Activated CD8-positive, alpha-beta T cell treated with anti-CD3 and anti-CD28 coated beads, Interleukin-2, amount 10 ng/mL, durations not matched to agents 7 days and 5 days (primary cell): ENCODE measurements at regions of chr5 and their contacts with region 1.

Region 1: GRCh38 chr5:54944364-54944763 is 41.0 kb downstream of the ESM1 start:
- DNase-seq: peak; percentile 65
- ATAC-seq: peak; percentile 67
- H3K4me3 Mint-ChIP-seq: no peak overlapping the region
- H3K27ac Mint-ChIP-seq: no peak overlapping the region
- H3K4me1 Mint-ChIP-seq: peaks cover 18% of the 10 kb centered on the region
- H3K27me3 Mint-ChIP-seq: peaks cover 10% of the 10 kb centered on the region

Region 2: GRCh38 chr5:54930736-54931135 is 13.6 kb before region 1 on chr5:
- CTCF ChIA-PET with region 1: interaction called, 33 read pairs
- POLR2A ChIA-PET with region 1: interaction called, 3 read pairs
- DNase-seq: no peak
- ATAC-seq: no peak
- H3K4me3 Mint-ChIP-seq: no peak overlapping the region
- H3K27ac Mint-ChIP-seq: no peak overlapping the region
- H3K4me1 Mint-ChIP-seq: peaks cover 17% of the 10 kb centered on the region
- H3K27me3 Mint-ChIP-seq: peaks cover 25% of the 10 kb centered on the region

Region 3: DNA sequence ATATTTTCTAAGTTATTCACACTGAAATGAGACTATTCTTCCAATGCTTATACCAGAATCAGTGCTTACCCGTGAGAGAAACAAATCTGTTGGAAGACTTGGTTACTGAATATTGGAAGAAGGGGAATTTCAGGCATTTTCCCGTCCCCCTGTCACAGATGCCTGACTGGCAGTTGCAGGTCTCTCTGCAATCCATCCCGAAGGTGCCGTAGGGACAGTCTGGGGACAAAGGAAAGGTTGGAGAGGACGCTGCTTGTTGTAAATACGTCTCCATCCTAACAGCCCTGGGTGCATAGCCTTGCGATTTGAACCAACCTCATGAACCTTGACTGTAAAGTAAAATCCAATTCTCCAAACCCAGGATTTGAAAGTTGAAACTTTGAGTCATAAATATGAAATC is 37.6 kb after region 1 on chr5:
- CTCF ChIA-PET with region 1: interaction called, 21 read pairs
- POLR2A ChIA-PET with region 1: no interaction called
- DNase-seq: no peak
- ATAC-seq: no peak
- H3K4me3 Mint-ChIP-seq: no peak overlapping the region
- H3K27ac Mint-ChIP-seq: no peak overlapping the region
- H3K4me1 Mint-ChIP-seq: peaks cover 34% of the 10 kb centered on the region
- H3K27me3 Mint-ChIP-seq: peaks cover 24% of the 10 kb centered on the region

Region 4: GRCh38 chr5:55037046-55037771 is 92.8 kb after region 1 on chr5:
- CTCF ChIA-PET with region 1: interaction called, 38 read pairs
- POLR2A ChIA-PET with region 1: no interaction called
- DNase-seq: peak; percentile 84
- ATAC-seq: peak; percentile 96
- H3K4me3 Mint-ChIP-seq: no peak overlapping the region
- H3K27ac Mint-ChIP-seq: peak overlapping the region; percentile 89
- H3K4me1 Mint-ChIP-seq: peaks cover 50% of the 10 kb centered on the region
- H3K27me3 Mint-ChIP-seq: no peaks in the 10 kb centered on the region

Region 5: GRCh38 chr5:55102348-55102747 is 158.0 kb after region 1 on chr5 and contains the start of gene GZMA:
- CTCF ChIA-PET with region 1: interaction called, 38 read pairs
- POLR2A ChIA-PET with region 1: no interaction called
- DNase-seq: peak; percentile 68
- ATAC-seq: peak; percentile 78
- H3K4me3 Mint-ChIP-seq: peak within 1 kb of the TSS; percentile 84
- H3K27ac Mint-ChIP-seq: peak within 1 kb of the TSS; percentile 94
- H3K4me1 Mint-ChIP-seq: peaks cover 86% of the 10 kb centered on the region
- H3K27me3 Mint-ChIP-seq: peaks cover 2% of the 10 kb centered on the region
- total RNA-seq, gene GZMA: 356 to 365 TPM

Region 6: DNA sequence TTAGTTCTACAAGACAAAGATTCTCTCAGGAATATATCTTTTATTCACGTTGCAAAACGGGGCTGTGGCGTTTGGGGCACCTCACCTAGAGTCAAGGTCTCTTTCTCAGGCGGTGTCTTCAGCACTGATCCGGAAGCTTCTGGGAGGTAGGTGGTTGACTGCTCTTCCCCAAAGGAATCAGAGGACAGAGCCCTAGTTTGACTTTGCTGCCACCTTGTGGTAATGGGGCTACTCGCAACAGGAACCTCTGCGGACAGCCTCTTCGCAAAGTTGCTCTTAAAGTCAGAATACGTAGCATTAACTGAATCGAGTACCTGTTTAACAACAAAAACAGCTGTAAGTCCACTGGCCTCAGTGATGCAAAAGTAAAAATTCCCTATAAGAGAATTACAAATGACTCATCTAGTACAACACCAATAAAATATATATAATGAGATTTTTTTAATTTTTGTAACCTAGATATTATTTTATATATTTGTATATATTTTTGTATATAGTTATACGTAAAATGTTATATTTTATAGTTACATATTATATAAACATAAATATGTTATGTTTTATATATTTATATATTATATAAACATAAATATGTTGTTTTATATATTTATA is 202.3 kb after region 1 on chr5:
- CTCF ChIA-PET with region 1: interaction called, 49 read pairs
- POLR2A ChIA-PET with region 1: interaction called, 3 read pairs
- DNase-seq: peak; percentile 91
- ATAC-seq: peak; percentile 82
- H3K4me3 Mint-ChIP-seq: peak overlapping the region; percentile 34
- H3K27ac Mint-ChIP-seq: peak overlapping the region; percentile 67
- H3K4me1 Mint-ChIP-seq: peaks cover 43% of the 10 kb centered on the region
- H3K27me3 Mint-ChIP-seq: peaks cover 21% of the 10 kb centered on the region